CD4-positive, alpha-beta T cell (primary cell): ENCODE measurements at regions of chr1 and their contacts with region 1.

Region 1: DNA sequence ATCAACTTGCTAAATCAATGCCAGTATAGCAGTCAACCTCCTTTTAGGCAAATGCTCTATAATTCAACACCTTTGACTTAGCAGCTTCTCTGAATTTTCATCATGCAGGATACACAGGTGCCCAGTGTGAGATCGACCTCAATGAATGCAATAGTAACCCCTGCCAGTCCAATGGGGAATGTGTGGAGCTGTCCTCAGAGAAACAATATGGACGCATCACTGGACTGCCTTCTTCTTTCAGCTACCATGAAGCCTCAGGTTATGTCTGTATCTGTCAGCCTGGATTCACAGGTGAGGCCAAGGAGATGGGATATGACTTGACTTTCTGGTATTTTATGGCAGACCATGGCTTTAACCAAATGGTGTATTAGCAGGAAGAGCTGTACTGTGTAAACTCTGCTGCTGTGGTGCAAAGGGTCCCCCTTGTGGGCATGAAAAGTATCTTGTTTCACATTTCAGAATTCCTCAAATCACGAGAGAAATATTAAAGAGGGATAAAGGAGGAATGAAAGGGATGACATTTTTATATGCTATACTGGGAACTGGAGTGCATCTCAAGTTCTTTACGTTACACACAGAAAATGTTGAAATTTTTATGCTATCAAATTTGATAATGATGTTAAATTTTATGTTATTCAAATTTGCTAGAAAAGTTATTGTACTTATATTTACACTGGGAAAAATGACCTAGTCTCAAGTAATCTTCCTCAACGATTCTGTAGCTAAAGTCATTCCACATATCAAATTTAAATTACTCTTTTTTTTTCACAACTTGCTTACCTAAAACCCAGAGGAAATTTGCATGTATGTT is 88.9 kb downstream of the CRB1 start:
- DNase-seq: peak in 6 of 14 experiments; percentile 3 to 58 (median 32)
- ATAC-seq: no peak
- H3K4me3 ChIP-seq: no peak overlapping the region
- H3K4me3 Mint-ChIP-seq: no peak overlapping the region
- H3K27ac ChIP-seq: no peak overlapping the region
- H3K27ac Mint-ChIP-seq: no peak overlapping the region
- H3K4me1 ChIP-seq: no peaks in the 10 kb centered on the region
- H3K4me1 Mint-ChIP-seq: no peaks in the 10 kb centered on the region
- H3K27me3 ChIP-seq: no peaks in the 10 kb centered on the region
- H3K27me3 Mint-ChIP-seq: no peaks in the 10 kb centered on the region
- CTCF ChIP-seq: peak; percentile 75

Region 2: DNA sequence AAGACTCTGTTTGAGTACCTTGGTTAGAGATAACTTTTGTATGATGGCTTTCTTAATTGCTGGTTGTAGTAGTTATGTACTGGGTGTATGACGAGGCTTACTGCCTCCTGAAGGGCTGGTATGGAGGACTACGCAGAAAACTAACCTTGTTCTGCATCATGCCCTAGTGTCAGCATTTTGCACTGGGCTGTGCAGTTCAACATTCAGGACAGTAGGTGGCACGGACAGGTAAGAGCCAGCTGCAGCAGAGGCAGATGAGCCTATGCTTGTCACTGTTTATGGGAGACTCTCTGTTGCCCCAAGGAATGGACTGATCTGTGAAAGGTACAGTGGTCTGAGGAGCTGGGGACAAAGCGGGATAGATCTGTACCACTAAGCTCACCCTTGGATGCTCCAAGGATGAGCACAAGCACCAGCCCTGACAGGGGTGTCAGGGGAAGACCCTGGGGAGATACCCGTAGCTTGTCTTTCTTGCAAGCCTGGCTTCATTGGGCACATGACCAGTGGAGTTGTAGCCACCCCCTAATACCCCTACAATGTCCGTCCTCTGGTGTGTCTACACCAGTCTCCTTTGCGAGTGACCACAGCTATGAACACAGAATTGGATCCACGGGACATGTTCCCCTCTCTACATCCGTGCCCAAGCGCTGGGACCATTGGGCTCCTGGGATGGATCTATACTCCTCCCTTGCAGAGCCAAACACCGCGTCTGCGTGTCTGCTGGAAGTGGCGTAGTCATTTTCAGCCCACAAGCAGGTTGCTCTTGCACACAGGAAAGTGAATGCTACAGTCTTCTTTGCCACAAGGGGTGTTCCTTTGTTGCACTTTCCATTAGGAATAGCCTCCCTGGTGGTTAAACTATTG is 633.4 kb before region 1 on chr1:
- CTCF ChIA-PET with region 1: no interaction called
- POLR2A ChIA-PET with region 1: no interaction called
- intact Hi-C with region 1: loop called (anchors 5 kb)
- DNase-seq: peak in 10 of 14 experiments; percentile 3 to 50 (median 8)
- ATAC-seq: peak; percentile 71
- H3K4me3 ChIP-seq: no peak overlapping the region
- H3K4me3 Mint-ChIP-seq: no peak overlapping the region
- H3K27ac ChIP-seq: no peak overlapping the region
- H3K27ac Mint-ChIP-seq: no peak overlapping the region
- H3K4me1 ChIP-seq: no peaks in the 10 kb centered on the region
- H3K4me1 Mint-ChIP-seq: no peaks in the 10 kb centered on the region
- H3K27me3 ChIP-seq: no peaks in the 10 kb centered on the region
- H3K27me3 Mint-ChIP-seq: no peaks in the 10 kb centered on the region
- CTCF ChIP-seq: peak; percentile 44

Region 3: DNA sequence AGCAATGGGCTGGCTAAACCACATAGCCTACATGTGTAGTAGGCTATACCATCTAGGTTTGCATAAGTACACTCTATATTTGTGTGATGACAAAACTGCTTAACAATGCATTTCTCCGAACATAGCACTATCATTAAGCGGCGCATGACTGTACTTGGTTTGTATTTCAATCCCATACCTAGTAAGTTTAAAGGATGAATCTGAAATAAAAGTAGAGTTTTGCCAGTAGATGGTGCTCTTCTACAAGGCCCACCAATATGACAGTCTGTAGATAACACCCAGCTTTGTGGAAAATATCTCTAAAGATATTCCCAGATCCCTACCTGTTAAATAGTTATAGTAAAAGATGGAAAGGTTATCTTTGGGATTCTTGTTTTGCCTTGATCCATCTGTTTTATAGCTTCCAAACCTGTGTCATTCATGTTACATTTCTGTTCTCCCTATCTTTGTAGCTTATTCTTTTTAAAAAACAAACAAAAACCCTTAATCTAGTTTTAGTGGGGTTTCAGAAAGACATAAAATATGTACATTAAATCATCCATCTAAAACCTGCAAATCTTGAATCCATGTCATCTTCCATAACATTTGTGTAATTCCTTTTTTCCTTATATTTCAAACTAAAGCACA is 176.6 kb before region 1 on chr1:
- CTCF ChIA-PET with region 1: interaction called, 16 read pairs
- POLR2A ChIA-PET with region 1: no interaction called
- intact Hi-C with region 1: loop called (anchors 1 kb)
- DNase-seq: peak in 3 of 14 experiments; percentile 48 to 56 (median 51)
- ATAC-seq: peak; percentile 59
- H3K4me3 ChIP-seq: no peak overlapping the region
- H3K4me3 Mint-ChIP-seq: no peak overlapping the region
- H3K27ac ChIP-seq: no peak overlapping the region
- H3K27ac Mint-ChIP-seq: no peak overlapping the region
- H3K4me1 ChIP-seq: no peaks in the 10 kb centered on the region
- H3K4me1 Mint-ChIP-seq: peaks cover 16% of the 10 kb centered on the region
- H3K27me3 ChIP-seq: no peaks in the 10 kb centered on the region
- H3K27me3 Mint-ChIP-seq: no peaks in the 10 kb centered on the region
- CTCF ChIP-seq: peak; percentile 77